CD8-positive, alpha-beta T cell (primary cell): ENCODE measurements at regions of chr10 and their contacts with region 1.

Region 1: GRCh38 chr10:101353692-101354327 is at the start of gene BTRC:
- DNase-seq: peak; percentile 90 to 99 (median 95)
- ATAC-seq: peak; percentile 96
- H3K4me3 ChIP-seq: peak within 1 kb of the TSS; percentile 84 to 86
- H3K4me3 Mint-ChIP-seq: peak within 1 kb of the TSS; percentile 99
- H3K27ac ChIP-seq: peak within 1 kb of the TSS; percentile 64 to 79
- H3K27ac Mint-ChIP-seq: peak within 1 kb of the TSS; percentile 97
- H3K4me1 ChIP-seq: peaks cover 6% of the 10 kb centered on the region
- H3K4me1 Mint-ChIP-seq: peaks cover 35% of the 10 kb centered on the region
- H3K27me3 ChIP-seq: no peaks in the 10 kb centered on the region
- H3K27me3 Mint-ChIP-seq: peaks cover 14% of the 10 kb centered on the region
- CTCF ChIP-seq: no peak
- total RNA-seq, gene BTRC: 8.5 to 9.3 TPM

Region 2: GRCh38 chr10:100535715-100536353 is 818.0 kb before region 1 on chr10 and contains the start of gene HIF1AN:
- CTCF ChIA-PET with region 1: no interaction called
- POLR2A ChIA-PET with region 1: no interaction called
- intact Hi-C with region 1: loop called in 1 of 2 experiments (anchors 10 kb)
- DNase-seq: peak; percentile 73 to 97 (median 88)
- ATAC-seq: peak; percentile 99
- H3K4me3 ChIP-seq: peak within 1 kb of the TSS; percentile 59 to 82
- H3K4me3 Mint-ChIP-seq: no peak within 1 kb of the TSS
- H3K27ac ChIP-seq: peak within 1 kb of the TSS; percentile 55 to 75
- H3K27ac Mint-ChIP-seq: no peak within 1 kb of the TSS
- H3K4me1 ChIP-seq: peaks cover 29% of the 10 kb centered on the region
- H3K4me1 Mint-ChIP-seq: peaks cover 19% of the 10 kb centered on the region
- H3K27me3 ChIP-seq: no peaks in the 10 kb centered on the region
- H3K27me3 Mint-ChIP-seq: no peaks in the 10 kb centered on the region
- CTCF ChIP-seq: peak; percentile 92
- total RNA-seq, gene HIF1AN: 28.0 to 31.2 TPM

Region 3: GRCh38 chr10:101060036-101060950 is 293.5 kb before region 1 on chr10:
- CTCF ChIA-PET with region 1: no interaction called
- POLR2A ChIA-PET with region 1: no interaction called
- intact Hi-C with region 1: loop called in 1 of 2 experiments (anchors 5 kb)
- DNase-seq: peak; percentile 80 to 96 (median 91)
- ATAC-seq: peak; percentile 67
- H3K4me3 ChIP-seq: peak overlapping the region; percentile 85 to 94
- H3K4me3 Mint-ChIP-seq: peak overlapping the region; percentile 98
- H3K27ac ChIP-seq: peak overlapping the region; percentile 55 to 92
- H3K27ac Mint-ChIP-seq: peak overlapping the region; percentile 91
- H3K4me1 ChIP-seq: peaks cover 27% of the 10 kb centered on the region
- H3K4me1 Mint-ChIP-seq: peaks cover 27% of the 10 kb centered on the region
- H3K27me3 ChIP-seq: peaks cover 20 to 27% of the 10 kb centered on the region in 2 experiments
- H3K27me3 Mint-ChIP-seq: peaks cover 18% of the 10 kb centered on the region
- CTCF ChIP-seq: peak; percentile 95

Region 4: DNA sequence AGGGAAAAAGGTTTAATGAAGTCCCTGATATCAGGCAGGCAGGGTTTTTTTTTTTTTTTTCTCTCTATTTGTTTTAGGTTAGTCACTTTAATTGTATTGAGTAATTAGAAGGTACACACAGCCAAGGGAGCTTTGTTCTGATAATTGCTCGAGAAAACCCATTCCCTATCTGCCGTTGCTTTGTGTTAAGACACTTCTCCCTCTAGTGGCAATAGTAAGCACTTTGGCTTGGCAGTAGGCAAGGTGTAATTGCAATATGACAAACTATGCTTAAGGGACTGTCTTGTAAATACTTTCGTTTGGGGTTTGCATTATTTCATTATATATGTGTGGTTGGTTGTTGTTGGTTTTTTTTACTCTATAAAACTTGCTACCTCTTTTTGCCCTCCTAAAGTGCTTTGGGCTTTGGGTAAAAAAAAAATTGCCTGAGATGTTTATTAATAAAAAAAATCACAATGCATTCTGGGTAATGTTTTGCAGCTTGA is 113.5 kb after region 1 on chr10:
- CTCF ChIA-PET with region 1: no interaction called
- POLR2A ChIA-PET with region 1: no interaction called
- intact Hi-C with region 1: loop called in 1 of 2 experiments (anchors 10 kb)
- DNase-seq: peak in 5 of 9 experiments; percentile 7 to 73 (median 23)
- ATAC-seq: peak; percentile 75
- H3K4me3 ChIP-seq: no peak overlapping the region
- H3K4me3 Mint-ChIP-seq: no peak overlapping the region
- H3K27ac ChIP-seq: no peak overlapping the region
- H3K27ac Mint-ChIP-seq: no peak overlapping the region
- H3K4me1 ChIP-seq: peaks cover 4% of the 10 kb centered on the region
- H3K4me1 Mint-ChIP-seq: peaks cover 8% of the 10 kb centered on the region
- H3K27me3 ChIP-seq: no peaks in the 10 kb centered on the region
- H3K27me3 Mint-ChIP-seq: no peaks in the 10 kb centered on the region
- CTCF ChIP-seq: peak; percentile 86

Region 5: DNA sequence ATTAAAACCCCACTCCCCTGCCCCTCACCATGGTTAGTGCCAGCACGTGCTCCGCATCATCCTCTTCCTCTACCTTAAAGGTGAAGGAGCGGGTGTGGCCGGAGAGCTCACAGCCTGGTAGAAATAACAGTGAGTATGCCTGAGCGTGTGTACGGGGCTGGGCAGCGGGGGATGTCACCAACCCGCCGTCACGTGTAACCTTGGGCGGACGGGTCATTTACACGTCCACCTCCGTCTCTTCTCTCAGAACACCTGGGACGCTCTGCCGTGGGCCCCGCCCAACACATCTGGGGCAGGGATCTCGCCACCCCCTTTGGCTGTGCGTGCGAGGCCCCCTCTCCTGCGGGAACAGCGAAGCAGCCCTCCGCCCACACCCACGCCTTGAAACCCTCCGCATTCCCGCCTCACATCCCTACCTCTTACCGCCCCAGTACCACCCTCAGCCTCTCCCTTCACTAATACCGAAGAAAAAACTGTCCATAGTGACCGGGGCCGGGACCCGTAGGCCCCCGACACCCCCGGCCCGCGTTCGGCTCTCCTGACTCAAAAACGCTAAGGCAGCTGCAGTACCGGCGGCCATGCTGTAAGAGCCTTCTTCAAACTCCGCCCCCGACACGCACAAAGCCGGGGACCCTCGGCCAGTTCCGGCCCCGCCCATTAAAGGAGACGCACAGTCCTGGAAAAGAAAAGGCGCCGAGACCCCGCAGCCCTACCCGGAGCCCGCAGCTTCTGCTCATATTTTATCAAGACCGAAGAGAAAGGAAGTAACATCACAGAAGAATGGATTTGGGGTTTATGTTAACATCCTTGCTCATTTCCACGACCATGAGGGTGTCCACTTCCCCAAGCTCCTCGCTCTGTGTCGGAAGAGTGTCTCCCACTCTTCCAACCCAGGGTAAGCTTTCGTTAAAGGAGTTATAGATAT is 429.3 kb after region 1 on chr10 and contains the start of gene NPM3:
- CTCF ChIA-PET with region 1: no interaction called
- POLR2A ChIA-PET with region 1: no interaction called
- intact Hi-C with region 1: loop called (anchors 5 to 10 kb)
- DNase-seq: peak; percentile 54 to 88 (median 83)
- ATAC-seq: peak; percentile 80
- H3K4me3 ChIP-seq: peak within 1 kb of the TSS; percentile 81 to 87
- H3K4me3 Mint-ChIP-seq: peak within 1 kb of the TSS; percentile 100
- H3K27ac ChIP-seq: peak within 1 kb of the TSS; percentile 64 to 81
- H3K27ac Mint-ChIP-seq: peak within 1 kb of the TSS; percentile 97
- H3K4me1 ChIP-seq: peaks cover 53% of the 10 kb centered on the region
- H3K4me1 Mint-ChIP-seq: peaks cover 71% of the 10 kb centered on the region
- H3K27me3 ChIP-seq: peaks cover 13 to 20% of the 10 kb centered on the region in 2 experiments
- H3K27me3 Mint-ChIP-seq: peaks cover 6% of the 10 kb centered on the region
- CTCF ChIP-seq: no peak
- total RNA-seq, gene NPM3: 21.1 to 25.1 TPM

Region 6: GRCh38 chr10:102132563-102133372 is 779.0 kb after region 1 on chr10 and contains the start of gene PPRC1:
- CTCF ChIA-PET with region 1: no interaction called
- POLR2A ChIA-PET with region 1: no interaction called
- intact Hi-C with region 1: loop called (anchors 2 to 5 kb)
- DNase-seq: peak; percentile 91 to 99 (median 96)
- ATAC-seq: peak; percentile 93
- H3K4me3 ChIP-seq: peak within 1 kb of the TSS; percentile 79 to 96
- H3K4me3 Mint-ChIP-seq: peak within 1 kb of the TSS; percentile 96
- H3K27ac ChIP-seq: peak within 1 kb of the TSS; percentile 75 to 92
- H3K27ac Mint-ChIP-seq: peak within 1 kb of the TSS; percentile 95
- H3K4me1 ChIP-seq: peaks cover 26% of the 10 kb centered on the region
- H3K4me1 Mint-ChIP-seq: peaks cover 40% of the 10 kb centered on the region
- H3K27me3 ChIP-seq: no peaks in the 10 kb centered on the region
- H3K27me3 Mint-ChIP-seq: no peaks in the 10 kb centered on the region
- CTCF ChIP-seq: peak; percentile 96
- total RNA-seq, gene PPRC1: 35.2 to 38.5 TPM

Region 7: DNA sequence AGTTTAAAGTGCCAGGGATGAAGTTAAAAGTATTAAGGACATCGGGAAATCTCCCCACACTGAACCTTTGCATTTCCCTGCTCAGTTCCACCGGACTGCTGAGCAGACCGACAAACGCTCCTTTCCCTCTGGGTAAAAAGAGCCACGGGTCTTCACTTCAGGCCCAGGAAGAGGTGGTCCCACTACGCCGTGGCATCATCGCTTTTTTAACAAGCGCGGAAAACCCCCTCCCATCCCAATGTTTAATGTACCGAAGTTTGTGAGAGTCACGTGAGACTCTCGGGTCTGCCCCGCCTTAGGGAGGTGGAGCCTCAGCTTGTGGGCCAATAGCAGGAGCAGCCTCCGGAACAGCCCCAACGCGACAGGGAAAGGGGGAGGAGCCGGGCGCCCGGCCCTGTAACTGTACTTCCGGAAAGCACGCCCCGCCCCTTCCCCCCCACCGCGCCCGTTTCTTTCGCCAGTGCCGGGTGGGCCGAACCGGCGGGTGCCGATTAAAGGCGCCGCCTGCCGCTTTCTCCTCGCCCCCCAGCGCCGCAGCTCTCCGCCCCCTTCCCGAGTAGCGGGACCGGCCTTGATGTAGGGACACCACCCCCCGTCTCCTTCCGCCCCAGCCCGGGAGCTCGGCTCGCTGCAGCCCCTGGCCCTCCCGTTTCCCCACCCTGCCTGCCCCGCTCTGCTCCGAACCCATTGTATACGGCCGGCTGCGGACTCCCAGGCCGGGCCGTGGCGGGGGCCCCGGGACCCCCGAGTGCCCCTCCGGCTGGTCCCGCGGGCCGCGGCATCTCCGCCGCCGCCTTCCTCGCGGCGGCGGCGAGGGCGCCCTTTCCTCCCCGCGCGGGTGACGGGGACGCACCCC is 1288.3 kb after region 1 on chr10:
- CTCF ChIA-PET with region 1: no interaction called
- POLR2A ChIA-PET with region 1: no interaction called
- intact Hi-C with region 1: loop called in 1 of 2 experiments (anchors 10 kb)
- DNase-seq: peak; percentile 94 to 99 (median 98)
- ATAC-seq: peak; percentile 69
- H3K4me3 ChIP-seq: peak overlapping the region; percentile 67 to 81
- H3K4me3 Mint-ChIP-seq: peak overlapping the region; percentile 91
- H3K27ac ChIP-seq: peak overlapping the region; percentile 71 to 94
- H3K27ac Mint-ChIP-seq: peak overlapping the region; percentile 96
- H3K4me1 ChIP-seq: peaks cover 12% of the 10 kb centered on the region
- H3K4me1 Mint-ChIP-seq: peaks cover 26% of the 10 kb centered on the region
- H3K27me3 ChIP-seq: no peaks in the 10 kb centered on the region
- H3K27me3 Mint-ChIP-seq: no peaks in the 10 kb centered on the region
- CTCF ChIP-seq: no peak